HEK293 (cell line): ENCODE measurements at regions of chr5 and their contacts with region 1.

Region 1: DNA sequence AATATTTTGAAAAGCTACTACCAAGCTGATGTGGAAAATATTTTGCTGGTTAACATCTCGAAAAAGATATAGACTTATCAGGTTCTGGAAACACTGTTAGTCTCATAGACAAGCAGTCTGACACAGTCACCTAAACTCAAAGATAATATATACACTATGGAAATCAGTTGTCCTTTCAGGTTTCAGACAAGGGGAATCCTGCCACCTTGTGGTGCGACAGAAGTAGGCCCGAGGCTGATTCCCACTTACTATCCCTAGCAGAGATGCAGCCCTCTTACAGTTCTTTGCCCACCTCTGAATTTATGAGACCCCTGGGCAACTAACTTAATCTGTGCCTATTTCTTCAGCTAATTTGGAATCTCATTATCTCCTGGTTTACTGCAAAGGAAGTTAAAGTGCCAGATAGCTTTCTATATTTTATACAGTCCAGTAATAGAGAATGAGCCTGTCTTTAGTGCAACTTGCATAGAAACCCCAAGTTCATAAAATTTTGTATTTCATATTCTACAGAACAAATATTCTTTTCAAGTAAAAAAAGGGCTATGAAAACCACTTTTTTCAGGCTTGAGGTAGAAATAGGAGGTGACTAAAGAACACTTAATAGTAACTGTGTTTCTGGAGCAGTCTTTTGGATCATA is 16.9 kb downstream of the RAD1 start:
- H3K4me3 ChIP-seq: no peak overlapping the region
- H3K27ac ChIP-seq: no peak overlapping the region
- H3K4me1 ChIP-seq: no peaks in the 10 kb centered on the region
- CTCF ChIP-seq: peak; percentile 78

Region 2: DNA sequence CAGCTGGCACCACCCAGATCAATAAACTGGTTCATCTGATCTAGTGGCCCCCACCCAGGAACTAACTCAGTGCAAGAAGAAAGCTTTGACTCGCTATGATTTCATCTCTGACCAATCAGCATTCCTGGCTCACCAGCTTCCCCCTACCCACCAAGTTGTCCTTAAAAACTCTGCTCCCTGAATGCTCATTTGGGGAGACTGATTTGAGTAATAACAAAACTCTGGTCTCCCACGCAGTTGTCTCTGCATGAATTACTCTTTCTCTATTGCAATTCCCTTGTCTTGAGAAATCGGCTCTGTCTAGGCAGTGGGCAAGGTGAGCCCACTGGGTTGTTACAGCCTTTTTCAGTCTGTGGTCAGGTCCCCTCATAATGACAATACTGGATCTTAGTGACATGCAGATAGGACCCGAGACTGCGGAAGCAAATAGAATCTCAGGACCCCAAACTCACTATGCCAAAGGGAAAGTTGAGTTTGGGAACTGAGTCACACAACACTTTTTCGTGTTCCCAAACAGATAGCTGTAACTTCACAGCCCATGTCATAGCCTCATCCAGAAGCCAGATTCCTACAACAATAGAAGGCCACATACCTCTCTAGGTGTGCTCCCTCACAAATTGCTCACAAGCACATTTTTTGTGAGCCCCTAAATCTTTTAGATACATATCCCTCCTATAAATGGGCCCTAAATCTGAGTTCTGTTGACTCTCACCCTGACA is 417.4 kb before region 1 on chr5:
- CTCF ChIA-PET with region 1: interaction called, 150 read pairs
- POLR2A ChIA-PET with region 1: interaction called, 3 read pairs
- H3K4me3 ChIP-seq: no peak overlapping the region
- H3K27ac ChIP-seq: no peak overlapping the region
- H3K4me1 ChIP-seq: no peaks in the 10 kb centered on the region
- CTCF ChIP-seq: no peak

Region 3: DNA sequence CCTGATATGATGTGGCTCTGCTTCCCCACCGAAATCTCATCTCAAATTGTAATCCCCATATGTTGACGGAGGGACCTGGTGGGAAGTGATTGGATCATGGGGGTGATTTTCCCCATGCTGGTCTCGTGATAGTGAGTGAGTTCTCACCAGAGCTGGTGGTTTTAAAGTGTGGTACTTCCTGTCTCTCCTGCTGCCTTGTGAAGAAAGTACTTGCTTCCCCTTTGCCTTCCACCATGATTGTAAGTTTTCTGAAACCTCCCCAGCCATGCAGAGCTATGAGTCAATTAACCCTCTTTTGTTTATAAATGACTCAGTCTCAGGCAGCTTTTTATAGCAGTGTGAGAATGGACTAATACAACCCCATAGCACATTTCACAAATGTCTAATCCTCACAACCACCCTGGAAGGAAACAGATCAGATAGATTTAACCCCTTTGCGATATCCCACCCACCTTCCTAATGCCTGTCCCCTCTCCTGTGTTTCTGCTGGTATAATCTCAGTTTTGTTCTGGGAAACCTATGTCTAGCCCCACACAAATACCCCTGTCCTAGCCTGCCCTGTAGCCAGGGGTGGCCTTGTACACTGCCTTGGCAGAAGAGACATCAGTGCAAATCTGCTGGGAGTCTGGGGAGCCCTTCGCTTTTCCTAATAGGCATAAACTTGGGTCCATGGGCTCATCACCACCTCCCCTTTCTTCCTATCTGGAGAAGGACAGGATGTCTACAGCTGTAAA is 399.2 kb before region 1 on chr5:
- CTCF ChIA-PET with region 1: interaction called, 10 read pairs
- POLR2A ChIA-PET with region 1: no interaction called
- H3K4me3 ChIP-seq: no peak overlapping the region
- H3K27ac ChIP-seq: no peak overlapping the region
- H3K4me1 ChIP-seq: peaks cover 9% of the 10 kb centered on the region
- CTCF ChIP-seq: no peak

Region 4: DNA sequence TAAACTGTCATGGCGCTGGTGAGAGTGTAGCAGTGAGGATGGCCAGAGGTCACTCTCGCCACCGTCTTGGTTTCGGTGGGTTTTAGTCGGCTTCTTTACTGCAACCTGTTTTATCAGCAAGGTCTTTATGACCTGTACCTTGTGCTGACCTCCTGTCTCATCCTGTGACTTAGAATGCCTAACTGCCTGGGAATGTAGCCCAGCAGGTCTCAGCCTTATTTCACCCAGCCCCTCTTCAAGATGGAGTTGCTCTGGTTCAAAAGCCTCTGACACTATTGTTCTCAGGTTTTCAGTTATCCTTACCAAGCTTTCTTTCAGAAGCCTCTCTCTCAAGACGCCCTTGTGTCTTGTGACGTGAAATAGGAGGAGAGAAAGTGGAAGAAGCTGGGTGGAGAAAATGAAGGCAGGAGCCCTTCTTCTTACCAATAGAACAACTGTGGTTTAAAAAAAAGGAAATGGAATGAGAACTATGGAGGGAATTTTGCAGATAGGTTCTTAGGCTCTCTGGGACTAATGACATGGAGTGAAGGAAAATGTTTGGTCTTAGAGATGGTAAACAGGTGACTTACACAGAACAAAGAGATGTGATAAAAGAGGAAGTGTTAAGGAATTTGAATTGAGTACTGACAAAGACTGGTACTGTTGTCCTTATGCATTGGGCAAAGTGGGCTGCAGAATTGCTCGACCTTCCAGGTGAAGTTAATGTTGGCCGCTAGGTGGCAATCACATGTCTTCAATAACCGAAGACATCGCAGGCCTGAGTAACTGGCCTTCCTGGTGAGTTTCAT is 375.6 kb before region 1 on chr5:
- CTCF ChIA-PET with region 1: interaction called, 156 read pairs
- POLR2A ChIA-PET with region 1: interaction called, 4 read pairs
- H3K4me3 ChIP-seq: no peak overlapping the region
- H3K27ac ChIP-seq: no peak overlapping the region
- H3K4me1 ChIP-seq: no peaks in the 10 kb centered on the region
- CTCF ChIP-seq: peak; percentile 90

Region 5: GRCh38 chr5:34686762-34687268 is 211.6 kb before region 1 on chr5:
- CTCF ChIA-PET with region 1: interaction called, 20 read pairs
- POLR2A ChIA-PET with region 1: no interaction called
- H3K4me3 ChIP-seq: no peak overlapping the region
- H3K27ac ChIP-seq: peak overlapping the region; percentile 51
- H3K4me1 ChIP-seq: peaks cover 51% of the 10 kb centered on the region
- CTCF ChIP-seq: peak; percentile 16; the same call in 1 of the 2 replicates

Region 6: DNA sequence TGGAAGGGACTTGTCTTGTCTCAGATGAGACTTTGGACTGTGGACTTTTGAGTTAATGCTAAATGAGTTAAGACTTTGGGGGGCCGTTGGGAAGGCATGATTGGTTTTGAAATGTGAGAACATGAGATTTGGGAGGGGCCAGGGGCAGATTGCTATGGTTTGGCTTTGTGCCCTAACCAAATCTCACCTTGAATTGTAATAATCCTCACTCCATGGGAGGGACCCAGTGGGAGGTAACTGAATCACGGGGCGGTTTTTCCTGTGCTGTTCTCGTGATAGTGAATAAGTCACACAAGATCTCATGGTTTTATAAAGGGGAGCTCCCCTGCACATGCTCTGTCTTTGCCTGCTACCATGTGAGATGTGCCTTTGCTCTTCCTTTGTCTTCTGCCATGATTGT is 170.1 kb before region 1 on chr5:
- CTCF ChIA-PET with region 1: no interaction called
- POLR2A ChIA-PET with region 1: no interaction called
- H3K4me3 ChIP-seq: no peak overlapping the region
- H3K27ac ChIP-seq: no peak overlapping the region
- H3K4me1 ChIP-seq: no peaks in the 10 kb centered on the region
- CTCF ChIP-seq: no peak

Region 7: DNA sequence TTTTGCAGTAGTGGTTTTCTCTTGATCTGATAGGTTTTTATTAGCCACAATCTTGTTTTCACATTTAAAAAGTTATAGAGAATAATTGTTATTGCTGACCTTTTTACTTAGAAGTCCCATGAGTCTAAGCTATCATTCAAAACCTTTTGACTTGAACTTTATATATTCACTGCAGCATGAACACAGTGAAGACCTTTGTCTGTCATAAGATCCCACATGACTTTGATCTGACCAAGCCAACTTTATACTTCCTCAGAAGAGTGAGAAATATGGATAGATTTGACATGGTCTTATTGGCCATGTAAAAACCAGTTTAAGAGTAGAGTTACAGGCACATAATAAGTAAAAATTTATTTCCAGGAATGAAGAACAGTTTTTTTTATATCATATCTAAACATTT is 17.1 kb before region 1 on chr5:
- CTCF ChIA-PET with region 1: interaction called, 14 read pairs
- POLR2A ChIA-PET with region 1: interaction called, 3 read pairs
- H3K4me3 ChIP-seq: no peak overlapping the region
- H3K27ac ChIP-seq: no peak overlapping the region
- H3K4me1 ChIP-seq: no peaks in the 10 kb centered on the region
- CTCF ChIP-seq: no peak

Region 8: GRCh38 chr5:34932791-34933346 is 34.5 kb after region 1 on chr5:
- CTCF ChIA-PET with region 1: no interaction called
- POLR2A ChIA-PET with region 1: no interaction called
- H3K4me3 ChIP-seq: no peak overlapping the region
- H3K27ac ChIP-seq: no peak overlapping the region
- H3K4me1 ChIP-seq: peaks cover 12% of the 10 kb centered on the region; the same call in 1 of the 2 replicates
- CTCF ChIP-seq: no peak